Heart right ventricle (tissue), 16 donors: ENCODE measurements at regions of chr2 and their contacts with region 1.

Region 1: GRCh38 chr2:230202430-230203109 is 17.2 kb downstream of the SP110 start:
- DNase-seq: no peak
- ATAC-seq: peak in 2 of 8 donors; percentile 29 to 30
- H3K4me3 ChIP-seq: no peak overlapping the region
- H3K27ac ChIP-seq: peak overlapping the region in 2 of 10 donors; percentile 31 to 39
- H3K4me1 ChIP-seq: peaks cover 0 to 15% (median 0%) of the 10 kb centered on the region in 9 donors
- H3K27me3 ChIP-seq: no peaks in the 10 kb centered on the region
- CTCF ChIP-seq: peak in 1 of 9 donors; percentile 10

Region 2: DNA sequence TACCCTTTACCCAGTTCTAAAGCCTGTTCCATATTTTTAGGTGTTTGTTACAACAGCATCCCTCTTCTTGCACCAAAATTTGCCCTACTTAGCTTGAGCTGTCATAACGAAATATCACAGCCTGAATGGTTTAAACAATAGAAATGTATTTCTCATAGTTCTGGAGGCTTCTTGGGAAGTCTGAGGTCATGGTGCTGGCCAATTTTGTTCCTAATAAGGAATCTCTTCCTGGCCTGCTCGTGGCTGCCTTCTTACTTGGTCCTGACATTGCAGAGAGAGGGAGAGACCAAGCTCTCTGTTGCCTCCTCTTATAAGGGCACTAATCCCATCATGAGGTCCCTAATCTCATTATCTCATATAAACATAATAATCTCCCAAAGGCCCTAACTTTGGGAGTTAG is 1199.3 kb before region 1 on chr2:
- intact Hi-C with region 1: loop called in 1 of 10 experiments (anchors 5 kb)
- DNase-seq: no peak
- ATAC-seq: no peak
- H3K4me3 ChIP-seq: no peak overlapping the region
- H3K27ac ChIP-seq: no peak overlapping the region
- H3K4me1 ChIP-seq: no peaks in the 10 kb centered on the region
- H3K27me3 ChIP-seq: no peaks in the 10 kb centered on the region
- CTCF ChIP-seq: no peak

Region 3: DNA sequence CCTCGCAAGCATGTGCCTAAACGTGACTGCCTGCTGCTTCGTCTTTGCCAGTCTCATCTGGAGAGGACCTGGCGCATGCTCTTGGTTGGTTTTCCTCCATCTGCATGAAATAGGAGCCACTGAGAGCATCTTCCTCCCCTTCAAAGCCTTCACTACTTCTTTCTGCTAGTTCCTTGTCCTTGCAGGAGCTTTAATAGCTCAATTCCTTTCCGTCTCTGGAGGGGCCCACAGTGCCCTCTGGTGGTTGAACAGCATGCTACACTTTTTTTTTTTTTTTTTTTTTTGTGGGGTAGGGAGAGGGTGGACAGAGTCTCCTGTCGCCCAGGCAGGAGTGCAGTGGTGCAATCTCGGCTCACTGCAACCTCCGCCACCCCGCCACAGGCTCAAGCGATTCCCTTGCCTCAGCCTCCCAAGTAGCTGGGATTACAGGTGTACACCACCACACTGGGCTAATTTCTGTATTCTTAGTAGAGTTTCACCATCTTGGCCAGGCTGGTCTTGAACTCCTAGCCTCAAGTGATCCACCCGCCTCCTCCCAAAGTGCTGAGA is 42.4 kb before region 1 on chr2:
- intact Hi-C with region 1: loop called in 1 of 10 experiments (anchors 1 kb)
- DNase-seq: peak; percentile 21 to 30
- ATAC-seq: peak; percentile 41 to 87 (median 71)
- H3K4me3 ChIP-seq: no peak overlapping the region
- H3K27ac ChIP-seq: no peak overlapping the region
- H3K4me1 ChIP-seq: peaks cover 0 to 8% (median 0%) of the 10 kb centered on the region in 9 donors
- H3K27me3 ChIP-seq: no peaks in the 10 kb centered on the region
- CTCF ChIP-seq: peak; percentile 68 to 90 (median 80)